ENCODE measurements at regions of chr12 and their contacts with region 1.

Region 1: GRCh38 chr12:40248585-40249297 is 23.9 kb downstream of the LRRK2 start:
- DNase-seq: peak; percentile 40
- ATAC-seq: peak; percentile 54
- H3K4me3 ChIP-seq: peak overlapping the region in 1 of 5 experiments; percentile 21
- H3K4me3 Mint-ChIP-seq: peak overlapping the region; percentile 62
- H3K27ac ChIP-seq: peak overlapping the region; percentile 34 to 67
- H3K27ac Mint-ChIP-seq: peak overlapping the region; percentile 85
- H3K4me1 ChIP-seq: peaks cover 9 to 17% of the 10 kb centered on the region in 2 donors
- H3K4me1 Mint-ChIP-seq: peaks cover 27% of the 10 kb centered on the region
- H3K27me3 ChIP-seq: no peaks in the 10 kb centered on the region
- H3K27me3 Mint-ChIP-seq: no peaks in the 10 kb centered on the region
- CTCF ChIP-seq: no peak

Region 2: GRCh38 chr12:40229690-40230651 is 18.8 kb before region 1 on chr12:
- CTCF ChIA-PET with region 1: interaction called, 8 read pairs
- POLR2A ChIA-PET with region 1: interaction called, 10 read pairs
- intact Hi-C with region 1: loop called (anchors 1 kb)
- DNase-seq: no peak
- ATAC-seq: no peak
- H3K4me3 ChIP-seq: peak overlapping the region in 4 of 5 experiments; percentile 8 to 64 (median 16)
- H3K4me3 Mint-ChIP-seq: peak overlapping the region; percentile 78
- H3K27ac ChIP-seq: peak overlapping the region; percentile 80 to 98
- H3K27ac Mint-ChIP-seq: peak overlapping the region; percentile 86
- H3K4me1 ChIP-seq: peaks cover 69 to 72% of the 10 kb centered on the region in 2 donors
- H3K4me1 Mint-ChIP-seq: peaks cover 66% of the 10 kb centered on the region
- H3K27me3 ChIP-seq: no peaks in the 10 kb centered on the region
- H3K27me3 Mint-ChIP-seq: no peaks in the 10 kb centered on the region
- CTCF ChIP-seq: no peak

Region 3: DNA sequence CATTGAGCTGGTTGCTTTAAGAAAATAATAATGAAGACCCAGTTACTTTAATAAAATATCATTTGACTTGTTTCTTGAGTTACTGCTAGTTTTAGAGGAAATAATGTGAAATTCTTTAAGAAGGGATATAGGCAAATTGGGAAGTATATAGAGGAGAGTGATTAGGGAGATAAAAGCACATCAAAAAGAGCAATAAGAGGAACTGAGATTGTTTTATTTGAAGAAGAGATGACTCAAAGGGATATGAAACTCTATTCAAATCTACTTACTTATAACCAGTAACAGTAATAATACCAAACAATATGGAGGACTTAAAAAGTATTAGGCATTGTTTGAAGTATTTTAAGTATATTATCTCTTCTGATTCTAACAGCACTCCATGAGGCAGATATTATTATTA is 13.2 kb after region 1 on chr12:
- CTCF ChIA-PET with region 1: interaction called, 5 read pairs
- POLR2A ChIA-PET with region 1: no interaction called
- intact Hi-C with region 1: loop called (anchors 1 kb)
- DNase-seq: peak; percentile 56
- ATAC-seq: peak; percentile 78
- H3K4me3 ChIP-seq: no peak overlapping the region
- H3K4me3 Mint-ChIP-seq: peak overlapping the region; percentile 44
- H3K27ac ChIP-seq: peak overlapping the region in 1 of 2 donors; percentile 32
- H3K27ac Mint-ChIP-seq: peak overlapping the region; percentile 0
- H3K4me1 ChIP-seq: peaks cover 20 to 32% of the 10 kb centered on the region in 2 donors
- H3K4me1 Mint-ChIP-seq: peaks cover 30% of the 10 kb centered on the region
- H3K27me3 ChIP-seq: no peaks in the 10 kb centered on the region
- H3K27me3 Mint-ChIP-seq: no peaks in the 10 kb centered on the region
- CTCF ChIP-seq: no peak

Region 4: DNA sequence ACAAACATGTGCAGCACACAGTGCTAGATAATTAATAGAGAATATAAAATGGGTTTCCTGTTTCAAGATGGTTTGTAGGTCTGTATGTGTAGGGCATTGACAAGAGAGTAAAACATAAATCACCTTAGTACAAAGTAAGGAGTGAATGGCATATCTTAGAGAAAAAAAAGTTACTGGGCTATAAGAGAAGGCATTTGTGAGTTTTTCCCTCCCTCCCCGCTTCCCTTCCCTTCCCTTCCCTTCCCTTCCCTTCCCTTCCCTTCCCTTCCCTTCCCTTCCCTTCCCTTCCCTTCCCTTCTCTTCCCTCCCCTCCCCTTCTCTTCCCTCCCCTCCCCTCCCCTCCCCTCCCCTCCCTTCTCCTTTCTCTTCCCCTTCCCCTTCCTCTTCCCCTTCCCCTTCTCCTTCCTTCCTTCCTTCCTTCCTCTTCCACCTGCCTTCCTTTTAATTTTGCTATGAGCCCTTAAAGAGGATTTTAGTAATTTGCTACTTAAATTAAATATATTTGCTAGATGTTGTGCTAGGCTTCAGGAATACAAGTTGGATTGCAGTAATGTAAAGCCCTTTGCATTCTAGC is 33.1 kb after region 1 on chr12:
- CTCF ChIA-PET with region 1: no interaction called
- POLR2A ChIA-PET with region 1: no interaction called
- intact Hi-C with region 1: no loop called
- DNase-seq: no peak
- ATAC-seq: no peak
- H3K4me3 ChIP-seq: no peak overlapping the region
- H3K4me3 Mint-ChIP-seq: no peak overlapping the region
- H3K27ac ChIP-seq: no peak overlapping the region
- H3K27ac Mint-ChIP-seq: peak overlapping the region; percentile 28
- H3K4me1 ChIP-seq: no peaks in the 10 kb centered on the region
- H3K4me1 Mint-ChIP-seq: peaks cover 4% of the 10 kb centered on the region
- H3K27me3 ChIP-seq: no peaks in the 10 kb centered on the region
- H3K27me3 Mint-ChIP-seq: no peaks in the 10 kb centered on the region
- CTCF ChIP-seq: no peak

Measured in B cell (primary cell).